ENCODE measurements at regions of chr5 and their contacts with region 1.

Region 1: GRCh38 chr5:74648835-74649293 is 8.3 kb upstream of the ENC1 start:
- DNase-seq: peak in 1 of 6 donors; percentile 34
- ATAC-seq: peak; percentile 65 to 84 (median 80)
- H3K4me3 ChIP-seq: peak overlapping the region in 1 of 4 donors; percentile 22
- H3K27ac ChIP-seq: peak overlapping the region in 3 of 4 donors; percentile 48 to 76 (median 62)
- H3K4me1 ChIP-seq: peaks cover 5 to 33% (median 30%) of the 10 kb centered on the region in 3 donors
- H3K27me3 ChIP-seq: no peaks in the 10 kb centered on the region
- CTCF ChIP-seq: peak; percentile 10 to 50 (median 44)

Region 2: DNA sequence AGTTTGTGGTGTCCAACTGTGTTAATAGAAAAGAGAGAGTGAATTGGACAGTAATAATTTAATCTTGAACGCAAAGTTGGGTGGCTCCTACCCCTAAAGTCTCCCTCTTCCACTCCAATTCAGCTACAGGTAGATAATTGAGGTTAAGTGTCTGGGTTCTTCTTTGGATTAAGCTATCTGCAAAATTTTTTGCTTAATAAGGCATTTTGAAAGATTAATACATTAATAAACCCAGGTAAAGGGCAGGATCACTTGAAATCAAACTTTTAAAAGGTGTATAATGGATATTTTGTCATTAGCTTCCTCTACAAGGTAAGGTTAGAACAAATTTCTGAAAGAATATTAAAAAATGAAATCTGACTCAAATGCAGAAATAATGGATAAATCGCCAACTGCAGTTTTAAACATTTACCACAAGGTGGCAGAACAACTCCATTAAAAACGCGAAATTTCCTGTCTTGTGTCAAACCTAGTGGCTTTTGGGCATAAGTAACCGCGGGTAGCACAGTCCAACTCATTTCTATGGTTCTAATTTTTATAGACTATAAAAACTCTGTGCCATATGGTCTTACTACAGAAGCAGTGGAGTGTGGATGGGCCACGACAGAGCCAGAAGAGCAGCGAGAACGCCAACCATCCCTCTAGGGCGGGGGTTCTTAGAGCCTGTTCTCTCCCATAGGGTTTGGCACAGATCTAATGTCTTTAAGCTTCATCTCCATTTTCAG is 746.4 kb before region 1 on chr5:
- intact Hi-C with region 1: loop called in 2 of 3 experiments (anchors 5 kb)
- DNase-seq: no peak
- ATAC-seq: peak; percentile 33 to 80 (median 72)
- H3K4me3 ChIP-seq: no peak overlapping the region
- H3K27ac ChIP-seq: no peak overlapping the region
- H3K4me1 ChIP-seq: peaks cover 7 to 19% (median 16%) of the 10 kb centered on the region in 3 donors
- H3K27me3 ChIP-seq: no peaks in the 10 kb centered on the region
- CTCF ChIP-seq: peak; percentile 58 to 78 (median 74)